ENCODE measurements at regions of chrX and their contacts with region 1.

Region 1: DNA sequence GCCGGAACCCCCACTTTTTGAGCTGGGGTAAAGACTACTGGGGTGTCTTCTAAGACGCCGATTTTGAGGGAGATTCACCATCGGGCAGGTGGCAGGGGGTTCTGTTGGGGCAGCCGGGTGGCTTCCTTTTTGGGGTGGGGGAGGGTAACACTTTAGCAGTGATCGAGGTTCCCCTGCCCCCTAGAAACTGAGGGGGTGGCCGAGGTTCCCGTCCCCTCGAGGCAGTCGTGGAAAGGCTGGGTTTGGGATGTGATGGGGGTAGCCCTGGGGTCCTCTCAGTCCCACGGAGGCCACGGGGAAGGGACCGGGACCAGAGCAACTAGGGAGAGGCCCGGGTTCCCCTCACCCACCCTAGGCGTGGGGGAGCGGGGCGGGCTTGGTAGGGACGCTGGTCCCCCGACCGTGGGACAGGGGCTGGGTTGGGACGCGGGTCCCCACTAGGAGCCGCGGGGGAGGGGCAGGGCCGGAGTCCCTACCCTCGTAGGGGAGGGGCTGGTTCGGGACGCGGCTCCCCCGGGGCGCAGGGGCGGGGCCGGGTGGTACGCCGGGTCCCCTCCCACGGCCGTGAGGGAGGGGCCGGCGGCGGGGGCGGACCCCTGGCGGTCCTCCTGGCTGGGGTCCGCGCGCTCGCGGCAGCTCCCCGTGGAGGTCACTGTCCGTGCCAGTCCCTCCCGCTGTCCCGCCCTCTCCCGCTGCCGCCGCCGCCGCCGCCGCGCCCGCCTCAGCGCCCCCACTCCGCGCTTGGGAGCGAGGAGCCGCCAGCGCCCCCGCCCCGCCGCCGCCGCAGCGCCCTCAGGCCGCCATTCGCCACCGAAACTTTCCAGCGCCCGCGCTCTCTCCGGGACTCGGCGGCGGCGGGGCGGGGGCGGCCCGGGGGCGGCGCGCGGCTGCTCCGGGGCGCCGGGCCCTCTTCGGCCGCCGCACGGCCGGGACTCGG is at the start of gene TBL1X:
- DNase-seq: peak; percentile 59 to 78 (median 69)
- ATAC-seq: peak in 3 of 4 donors; percentile 60 to 67 (median 62)
- H3K4me3 ChIP-seq: peak within 1 kb of the TSS; percentile 63 to 84 (median 71)
- H3K27ac ChIP-seq: peak within 1 kb of the TSS in 10 of 12 donors; percentile 40 to 86 (median 76)
- H3K4me1 ChIP-seq: peaks cover 0 to 39% (median 12%) of the 10 kb centered on the region in 12 donors
- H3K27me3 ChIP-seq: peaks cover 0 to 59% (median 0%) of the 10 kb centered on the region in 9 donors
- CTCF ChIP-seq: no peak
- POLR2A ChIP-seq: peak in 1 of 2 donors; percentile 31
- total RNA-seq, gene TBL1X: 9.2 to 30.7 (median 10.3) TPM

Region 2: DNA sequence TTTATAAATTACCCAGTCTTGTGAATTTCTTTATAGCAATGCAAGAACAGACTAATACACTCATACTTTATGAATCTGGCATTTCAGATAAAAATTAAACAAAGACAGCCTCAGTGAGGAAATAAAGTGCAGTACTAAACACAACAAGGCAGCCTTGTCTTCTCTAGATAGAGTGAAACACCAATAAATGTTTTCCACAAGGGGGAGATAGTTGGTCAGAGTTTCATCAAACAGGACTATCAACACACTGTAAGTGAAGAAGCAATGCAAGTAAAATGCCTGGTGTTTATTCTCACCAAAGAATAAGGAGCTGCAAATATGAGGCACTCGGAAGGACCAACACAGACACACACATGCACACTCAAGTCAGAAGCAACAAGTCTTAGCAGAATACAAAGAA is 493.6 kb before region 1 on chrX:
- intact Hi-C with region 1: loop called in 2 of 10 experiments (anchors 5 to 10 kb)
- DNase-seq: no peak
- ATAC-seq: peak in 2 of 4 donors; percentile 34 to 50
- H3K4me3 ChIP-seq: no peak overlapping the region
- H3K27ac ChIP-seq: no peak overlapping the region
- H3K4me1 ChIP-seq: no peaks in the 10 kb centered on the region
- H3K27me3 ChIP-seq: peaks cover 0 to 7% (median 0%) of the 10 kb centered on the region in 9 donors
- CTCF ChIP-seq: peak in 10 of 12 donors; percentile 8 to 48 (median 32)
- POLR2A ChIP-seq: no peak

Region 3: DNA sequence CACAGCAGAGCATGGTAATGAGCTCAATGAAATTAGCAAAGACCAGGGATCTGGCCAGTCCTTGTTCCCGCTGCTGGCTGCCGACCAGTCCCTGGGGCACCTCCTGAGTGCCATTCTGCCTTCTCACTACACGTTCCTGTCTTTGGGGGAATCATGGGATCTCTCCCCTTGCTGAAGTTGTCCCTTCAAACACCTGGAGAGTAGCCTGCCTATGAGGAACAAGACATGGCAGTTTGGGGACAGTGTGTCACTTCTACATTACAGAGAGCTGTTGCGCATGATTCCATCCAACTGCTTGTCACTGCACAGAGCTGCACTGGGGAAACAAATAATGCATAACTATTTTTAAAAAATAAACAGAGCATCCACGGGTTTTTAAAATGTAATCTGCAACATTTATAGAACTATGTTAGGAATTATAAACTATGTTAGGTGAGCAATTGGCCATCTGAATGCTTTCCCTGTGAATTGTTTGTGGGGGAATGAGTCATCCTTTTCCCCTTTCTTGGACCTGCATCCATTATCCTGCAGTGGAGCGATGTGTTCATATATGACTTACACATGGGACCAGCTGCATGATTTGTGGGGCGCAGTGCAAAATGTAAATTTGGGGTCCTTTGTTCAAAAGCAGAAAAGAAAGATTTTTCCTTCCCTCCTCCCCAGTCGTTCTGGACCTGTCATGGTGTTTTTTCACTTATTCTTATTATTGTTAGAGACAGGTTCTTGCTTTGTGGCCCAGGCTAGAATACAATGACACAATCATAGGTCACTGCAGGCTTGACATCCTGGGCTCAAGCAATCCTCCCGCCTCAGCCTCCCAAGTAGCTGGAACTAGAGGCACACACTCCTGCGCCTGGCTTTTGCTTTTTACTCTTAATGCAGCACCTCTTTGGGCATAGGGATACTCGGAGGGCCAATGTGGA is 114.9 kb before region 1 on chrX:
- intact Hi-C with region 1: loop called in 2 of 10 experiments (anchors 5 to 10 kb)
- DNase-seq: no peak
- ATAC-seq: no peak
- H3K4me3 ChIP-seq: no peak overlapping the region
- H3K27ac ChIP-seq: no peak overlapping the region
- H3K4me1 ChIP-seq: peaks cover 0 to 34% (median 0%) of the 10 kb centered on the region in 12 donors
- H3K27me3 ChIP-seq: peaks cover 0 to 5% (median 0%) of the 10 kb centered on the region in 9 donors
- CTCF ChIP-seq: no peak
- POLR2A ChIP-seq: no peak

Region 4: DNA sequence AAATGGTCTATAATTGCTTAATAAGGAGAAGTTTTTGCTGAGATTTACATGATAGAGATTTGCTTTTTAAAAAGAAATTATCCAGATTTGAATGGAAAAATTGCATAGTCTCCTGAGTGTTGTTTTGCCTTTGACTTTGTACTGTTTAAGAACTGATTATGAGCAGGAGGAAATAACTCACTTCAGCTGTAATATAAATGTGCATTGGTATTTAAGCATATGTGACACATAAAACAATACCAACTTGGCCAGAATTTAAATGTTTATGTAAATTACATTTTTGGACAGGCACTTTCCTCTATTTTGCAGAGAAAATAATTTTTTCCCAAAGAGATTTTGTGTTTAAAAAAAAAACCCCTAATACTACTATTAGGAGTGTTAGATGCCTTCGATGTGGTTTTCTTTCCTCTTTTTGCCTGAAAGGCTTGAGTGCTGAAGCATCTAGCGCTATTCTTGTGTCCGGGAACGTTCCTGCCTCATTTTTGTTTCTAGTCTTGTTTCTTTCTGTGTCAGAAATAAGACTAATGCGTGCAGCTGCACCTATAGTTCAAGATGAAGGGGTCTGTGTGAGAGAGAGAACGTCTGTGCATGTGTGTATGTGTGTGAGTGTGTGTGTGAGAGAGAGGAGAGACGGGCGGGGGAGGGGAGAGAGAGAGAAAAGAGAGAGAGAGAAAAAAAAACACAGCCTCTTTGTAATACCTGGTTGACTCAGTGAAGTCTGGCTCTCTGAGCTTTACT is 61.0 kb after region 1 on chrX:
- intact Hi-C with region 1: loop called in 1 of 10 experiments (anchors 5 kb)
- DNase-seq: no peak
- ATAC-seq: no peak
- H3K4me3 ChIP-seq: no peak overlapping the region
- H3K27ac ChIP-seq: no peak overlapping the region
- H3K4me1 ChIP-seq: peaks cover 0 to 11% (median 2%) of the 10 kb centered on the region in 12 donors
- H3K27me3 ChIP-seq: peaks cover 0 to 16% (median 0%) of the 10 kb centered on the region in 9 donors
- CTCF ChIP-seq: no peak
- POLR2A ChIP-seq: no peak

Region 5: GRCh38 chrX:9662148-9662547 is 197.4 kb after region 1 on chrX:
- intact Hi-C with region 1: loop called in 1 of 10 experiments (anchors 10 kb)
- DNase-seq: no peak
- ATAC-seq: peak in 1 of 4 donors; percentile 41
- H3K4me3 ChIP-seq: no peak overlapping the region
- H3K27ac ChIP-seq: no peak overlapping the region
- H3K4me1 ChIP-seq: peaks cover 0 to 2% (median 0%) of the 10 kb centered on the region in 12 donors
- H3K27me3 ChIP-seq: no peaks in the 10 kb centered on the region
- CTCF ChIP-seq: no peak
- POLR2A ChIP-seq: no peak

Region 6: GRCh38 chrX:9708904-9709553 is 244.3 kb after region 1 on chrX:
- intact Hi-C with region 1: loop called in 3 of 10 experiments (anchors 5 to 10 kb)
- DNase-seq: peak; percentile 60 to 84 (median 74)
- ATAC-seq: peak in 3 of 4 donors; percentile 80 to 83 (median 83)
- H3K4me3 ChIP-seq: no peak overlapping the region
- H3K27ac ChIP-seq: no peak overlapping the region
- H3K4me1 ChIP-seq: peaks cover 0 to 4% (median 0%) of the 10 kb centered on the region in 12 donors
- H3K27me3 ChIP-seq: no peaks in the 10 kb centered on the region
- CTCF ChIP-seq: peak; percentile 73 to 92 (median 78)
- POLR2A ChIP-seq: no peak

Measured in heart left ventricle (tissue), 16 donors.